ENCODE measurements at regions of chr1 and their contacts with region 1.

Region 1: DNA sequence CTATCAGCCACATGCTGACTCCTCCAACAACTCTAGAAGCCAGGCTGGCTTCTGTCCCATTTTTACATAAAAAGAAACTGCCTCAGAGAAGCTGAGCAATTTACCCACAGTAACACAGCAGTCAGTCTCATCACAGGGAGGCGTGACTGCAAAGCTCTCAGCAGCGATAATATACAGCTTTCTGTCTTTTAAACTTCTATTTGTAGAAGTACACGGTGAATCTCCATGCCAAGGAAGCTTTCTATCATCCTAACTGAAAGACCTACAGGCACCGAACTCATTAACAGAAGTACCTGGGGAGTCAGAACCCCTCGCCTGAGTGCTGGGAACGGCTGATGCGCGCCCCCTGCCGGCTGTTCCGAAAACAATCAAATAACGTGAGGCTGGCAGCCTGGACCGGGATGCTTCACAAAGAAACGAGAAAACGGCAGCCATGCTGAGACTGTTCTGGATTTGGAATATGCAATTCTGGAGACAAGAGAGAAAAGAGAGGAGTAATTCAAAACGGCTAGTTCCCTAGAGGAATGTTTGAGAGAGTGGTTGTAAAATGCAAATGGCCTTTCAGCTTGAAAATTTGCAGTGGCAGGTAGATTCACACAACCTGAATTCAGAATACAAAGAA is 43.5 kb upstream of the RAB4A start:
- DNase-seq: peak; percentile 94
- H3K4me3 Mint-ChIP-seq: peak overlapping the region; percentile 5
- H3K27ac Mint-ChIP-seq: peak overlapping the region; percentile 1
- H3K4me1 Mint-ChIP-seq: peaks cover 66% of the 10 kb centered on the region
- H3K27me3 Mint-ChIP-seq: no peaks in the 10 kb centered on the region
- CTCF ChIP-seq: peak; percentile 99

Region 2: GRCh38 chr1:228802386-228803220 is 424.8 kb before region 1 on chr1:
- CTCF ChIA-PET with region 1: interaction called, 8 read pairs
- POLR2A ChIA-PET with region 1: interaction called, 17 read pairs
- intact Hi-C with region 1: no loop called
- DNase-seq: peak; percentile 33
- H3K4me3 Mint-ChIP-seq: no peak overlapping the region
- H3K27ac Mint-ChIP-seq: no peak overlapping the region
- H3K4me1 Mint-ChIP-seq: peaks cover 23% of the 10 kb centered on the region
- H3K27me3 Mint-ChIP-seq: peaks cover 18% of the 10 kb centered on the region
- CTCF ChIP-seq: no peak

Region 3: GRCh38 chr1:228944935-228945371 is 282.5 kb before region 1 on chr1:
- CTCF ChIA-PET with region 1: interaction called, 3 read pairs
- POLR2A ChIA-PET with region 1: no interaction called
- intact Hi-C with region 1: loop called (anchors 2 kb)
- DNase-seq: no peak
- H3K4me3 Mint-ChIP-seq: no peak overlapping the region
- H3K27ac Mint-ChIP-seq: no peak overlapping the region
- H3K4me1 Mint-ChIP-seq: no peaks in the 10 kb centered on the region
- H3K27me3 Mint-ChIP-seq: peaks cover 23% of the 10 kb centered on the region
- CTCF ChIP-seq: no peak

Region 4: GRCh38 chr1:229117664-229118300 is 109.6 kb before region 1 on chr1:
- CTCF ChIA-PET with region 1: interaction called, 26 read pairs
- POLR2A ChIA-PET with region 1: interaction called, 11 read pairs
- intact Hi-C with region 1: no loop called
- DNase-seq: peak; percentile 98
- H3K4me3 Mint-ChIP-seq: peak overlapping the region; percentile 15
- H3K27ac Mint-ChIP-seq: peak overlapping the region; percentile 55
- H3K4me1 Mint-ChIP-seq: peaks cover 26% of the 10 kb centered on the region
- H3K27me3 Mint-ChIP-seq: no peaks in the 10 kb centered on the region
- CTCF ChIP-seq: no peak

Region 5: GRCh38 chr1:229203030-229203751 is 24.2 kb before region 1 on chr1:
- CTCF ChIA-PET with region 1: interaction called, 11 read pairs
- POLR2A ChIA-PET with region 1: interaction called, 4 read pairs
- intact Hi-C with region 1: no loop called
- DNase-seq: peak; percentile 86
- H3K4me3 Mint-ChIP-seq: no peak overlapping the region
- H3K27ac Mint-ChIP-seq: no peak overlapping the region
- H3K4me1 Mint-ChIP-seq: no peaks in the 10 kb centered on the region
- H3K27me3 Mint-ChIP-seq: peaks cover 22% of the 10 kb centered on the region
- CTCF ChIP-seq: no peak

Region 6: DNA sequence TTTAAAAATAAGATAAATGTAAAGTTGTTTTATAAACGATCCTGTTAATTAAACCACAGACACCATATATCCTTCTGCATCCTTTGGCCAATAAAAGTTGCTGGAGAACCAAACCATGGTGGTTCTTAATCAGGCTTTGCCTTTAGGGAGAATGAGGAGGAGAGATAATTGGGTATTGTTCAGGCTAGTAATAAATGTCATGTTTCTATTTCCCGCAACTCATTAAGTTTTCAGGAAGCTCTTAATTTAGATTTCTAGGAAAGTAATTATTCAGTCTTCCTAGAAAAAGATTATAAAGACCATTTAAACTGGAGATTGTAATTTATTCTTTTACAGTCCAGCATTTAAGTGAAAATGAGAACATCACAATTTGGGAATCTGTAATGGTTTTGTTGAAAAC is 78.0 kb after region 1 on chr1:
- CTCF ChIA-PET with region 1: no interaction called
- POLR2A ChIA-PET with region 1: no interaction called
- intact Hi-C with region 1: no loop called
- DNase-seq: no peak
- H3K4me3 Mint-ChIP-seq: no peak overlapping the region
- H3K27ac Mint-ChIP-seq: no peak overlapping the region
- H3K4me1 Mint-ChIP-seq: no peaks in the 10 kb centered on the region
- H3K27me3 Mint-ChIP-seq: no peaks in the 10 kb centered on the region
- CTCF ChIP-seq: no peak

Region 7: GRCh38 chr1:229452956-229453801 is 225.8 kb after region 1 on chr1:
- CTCF ChIA-PET with region 1: interaction called, 23 read pairs
- POLR2A ChIA-PET with region 1: interaction called, 3 read pairs
- intact Hi-C with region 1: no loop called
- DNase-seq: peak; percentile 51
- H3K4me3 Mint-ChIP-seq: no peak overlapping the region
- H3K27ac Mint-ChIP-seq: no peak overlapping the region
- H3K4me1 Mint-ChIP-seq: peaks cover 6% of the 10 kb centered on the region
- H3K27me3 Mint-ChIP-seq: no peaks in the 10 kb centered on the region
- CTCF ChIP-seq: peak; percentile 67